Heart left ventricle (tissue), 16 donors: ENCODE measurements at regions of chr10 and their contacts with region 1.

Region 1: DNA sequence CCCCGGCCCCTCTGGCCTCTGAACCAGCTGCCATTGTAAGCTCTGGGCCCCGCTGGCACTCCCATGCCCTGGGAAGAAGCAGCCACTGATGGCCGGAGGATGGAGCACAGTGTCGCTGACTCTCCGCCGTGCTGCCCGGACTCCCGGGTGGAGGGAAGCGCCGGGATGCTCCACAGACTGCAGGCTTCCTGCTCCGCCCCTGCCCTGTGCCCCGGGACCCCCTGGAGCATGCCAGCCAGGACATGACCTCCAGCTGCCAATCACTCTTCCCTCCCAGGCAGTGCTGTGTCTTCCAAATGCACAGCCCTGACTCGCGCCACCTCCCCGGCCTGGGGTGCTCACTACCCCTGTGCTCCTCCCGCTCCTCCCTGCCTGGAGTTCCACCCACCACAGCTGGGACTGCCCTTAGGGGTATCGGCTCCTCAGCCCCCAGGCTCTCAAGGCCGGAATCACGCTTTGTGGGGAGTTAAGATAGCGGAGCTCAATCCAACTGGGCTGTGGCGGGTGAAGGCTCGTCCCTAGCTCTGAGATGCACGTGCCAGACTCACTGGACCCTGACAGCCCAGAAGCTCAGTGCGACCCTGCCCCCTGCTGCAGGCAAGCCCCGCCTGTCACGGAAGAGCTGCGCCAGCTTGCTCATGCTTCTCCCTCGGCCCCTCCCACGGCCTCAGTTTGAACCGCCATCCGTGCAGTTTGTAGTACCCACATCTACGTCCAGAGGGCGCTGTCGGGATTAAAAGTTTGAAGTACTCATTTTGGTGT is 142.3 kb upstream of the TCERG1L start:
- DNase-seq: peak in 4 of 5 donors; percentile 36 to 57 (median 53)
- ATAC-seq: peak in 3 of 4 donors; percentile 65 to 69 (median 67)
- H3K4me3 ChIP-seq: peak overlapping the region in 10 of 12 donors; percentile 6 to 53 (median 35)
- H3K27ac ChIP-seq: no peak overlapping the region
- H3K4me1 ChIP-seq: peaks cover 0 to 7% (median 0%) of the 10 kb centered on the region in 12 donors
- H3K27me3 ChIP-seq: peaks cover 0 to 50% (median 26%) of the 10 kb centered on the region in 9 donors
- CTCF ChIP-seq: peak; percentile 74 to 91 (median 84)
- POLR2A ChIP-seq: no peak

Region 2: DNA sequence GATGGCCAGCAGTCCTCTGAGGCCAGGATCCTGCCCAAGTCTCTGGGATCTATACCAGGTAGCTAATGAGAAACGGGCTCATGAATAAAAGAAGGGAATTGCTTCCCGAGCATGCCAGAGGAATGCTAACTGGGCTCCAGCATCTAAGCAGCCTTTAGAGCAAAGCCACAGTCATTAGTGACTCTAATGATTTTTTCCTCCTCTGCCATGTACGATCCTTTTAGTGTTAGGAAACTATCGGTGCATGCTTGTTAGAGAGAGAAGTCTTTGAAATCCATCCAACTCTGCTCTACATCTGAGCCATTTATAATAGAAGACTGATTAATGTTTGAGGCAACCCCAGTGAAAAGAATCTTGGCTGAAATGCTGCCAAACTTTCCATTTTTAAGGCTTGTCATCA is 17.3 kb before region 1 on chr10:
- intact Hi-C with region 1: loop called in 1 of 10 experiments (anchors 1 kb)
- DNase-seq: no peak
- ATAC-seq: no peak
- H3K4me3 ChIP-seq: no peak overlapping the region
- H3K27ac ChIP-seq: no peak overlapping the region
- H3K4me1 ChIP-seq: no peaks in the 10 kb centered on the region
- H3K27me3 ChIP-seq: peaks cover 0 to 41% (median 7%) of the 10 kb centered on the region in 9 donors
- CTCF ChIP-seq: no peak
- POLR2A ChIP-seq: no peak

Region 3: GRCh38 chr10:131874991-131875451 is 421.2 kb after region 1 on chr10:
- intact Hi-C with region 1: loop called in 2 of 10 experiments (anchors 5 to 10 kb)
- DNase-seq: peak; percentile 61 to 84 (median 76)
- ATAC-seq: peak; percentile 44 to 76 (median 73)
- H3K4me3 ChIP-seq: no peak overlapping the region
- H3K27ac ChIP-seq: no peak overlapping the region
- H3K4me1 ChIP-seq: peaks cover 0 to 7% (median 0%) of the 10 kb centered on the region in 12 donors
- H3K27me3 ChIP-seq: peaks cover 0 to 38% (median 0%) of the 10 kb centered on the region in 9 donors
- CTCF ChIP-seq: peak; percentile 50 to 80 (median 66)
- POLR2A ChIP-seq: no peak